Stomach (tissue), 19 donors: ENCODE measurements at regions of chr7 and their contacts with region 1.

Region 1: GRCh38 chr7:12619461-12620063 is 49.0 kb downstream of the SCIN start:
- DNase-seq: no peak
- H3K4me3 ChIP-seq: no peak overlapping the region
- H3K27ac ChIP-seq: no peak overlapping the region
- H3K4me1 ChIP-seq: peaks cover 0 to 6% (median 0%) of the 10 kb centered on the region in 4 donors
- H3K27me3 ChIP-seq: no peaks in the 10 kb centered on the region
- CTCF ChIP-seq: no peak
- EP300 ChIP-seq: no peak
- POLR2A ChIP-seq: no peak

Region 2: DNA sequence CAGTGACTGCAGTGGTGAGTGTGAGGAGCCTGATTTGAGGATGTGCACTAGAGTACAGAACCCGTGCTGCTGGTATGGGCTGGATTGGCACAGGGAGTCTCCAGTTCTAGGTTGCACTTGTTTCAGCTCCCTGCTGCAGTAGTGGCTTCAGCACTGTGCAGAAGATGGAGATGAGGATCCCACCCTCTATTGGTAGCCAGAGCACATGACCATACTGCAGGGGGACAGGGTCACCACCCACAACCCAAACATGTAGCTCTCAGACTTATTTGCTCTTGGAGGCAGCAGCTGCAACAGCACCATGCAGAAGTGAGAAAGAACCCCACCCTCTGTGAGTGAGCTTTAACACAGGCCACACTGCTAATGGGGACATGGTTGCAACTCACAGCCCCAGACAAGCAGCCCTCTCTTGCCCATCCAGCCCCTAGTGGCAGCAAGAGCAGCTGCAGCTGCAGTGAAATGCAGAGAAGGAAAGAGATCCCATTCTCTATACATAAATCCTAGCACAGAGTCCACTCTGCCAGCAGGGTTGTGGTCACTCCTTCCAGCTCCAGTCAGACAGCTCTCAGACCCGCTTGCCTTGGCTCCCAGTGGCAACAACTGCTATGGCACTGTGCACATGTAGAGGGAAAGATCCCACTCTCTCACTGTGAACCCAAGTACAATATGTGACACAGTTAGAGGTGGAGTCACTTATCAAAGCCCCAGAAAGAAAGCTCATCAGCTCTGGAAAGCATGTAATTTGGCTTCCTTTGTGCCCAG is 100.5 kb before region 1 on chr7:
- intact Hi-C with region 1: loop called (anchors 5 kb)
- DNase-seq: peak in 1 of 2 donors; percentile 22
- H3K4me3 ChIP-seq: no peak overlapping the region
- H3K27ac ChIP-seq: no peak overlapping the region
- H3K4me1 ChIP-seq: no peaks in the 10 kb centered on the region
- H3K27me3 ChIP-seq: no peaks in the 10 kb centered on the region
- CTCF ChIP-seq: peak in 2 of 7 experiments; percentile 14 to 24
- EP300 ChIP-seq: no peak
- POLR2A ChIP-seq: no peak